ENCODE measurements at regions of chr6 and their contacts with region 1.

Region 1: DNA sequence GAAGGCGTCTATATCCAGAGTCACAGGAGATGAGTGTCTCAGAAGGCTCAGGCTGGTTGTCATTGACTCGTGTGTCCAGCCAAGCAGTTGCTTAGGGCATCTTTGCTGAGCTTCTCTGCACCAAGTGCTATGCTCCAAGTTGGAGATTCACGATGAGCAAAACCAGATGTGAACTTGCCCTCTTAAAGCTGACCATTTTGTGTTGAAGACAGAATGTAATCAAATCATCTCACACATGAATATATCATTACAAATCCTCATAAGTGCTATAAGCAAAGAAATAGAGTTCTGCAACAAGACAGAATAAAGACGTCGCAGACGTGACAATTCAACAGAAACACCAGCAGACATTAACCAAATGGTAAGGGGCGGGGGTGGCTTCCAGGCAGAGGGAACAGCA is 103.9 kb downstream of the ALDH8A1 start:
- DNase-seq: no peak
- H3K4me3 ChIP-seq: no peak overlapping the region
- CTCF ChIP-seq: no peak

Region 2: DNA sequence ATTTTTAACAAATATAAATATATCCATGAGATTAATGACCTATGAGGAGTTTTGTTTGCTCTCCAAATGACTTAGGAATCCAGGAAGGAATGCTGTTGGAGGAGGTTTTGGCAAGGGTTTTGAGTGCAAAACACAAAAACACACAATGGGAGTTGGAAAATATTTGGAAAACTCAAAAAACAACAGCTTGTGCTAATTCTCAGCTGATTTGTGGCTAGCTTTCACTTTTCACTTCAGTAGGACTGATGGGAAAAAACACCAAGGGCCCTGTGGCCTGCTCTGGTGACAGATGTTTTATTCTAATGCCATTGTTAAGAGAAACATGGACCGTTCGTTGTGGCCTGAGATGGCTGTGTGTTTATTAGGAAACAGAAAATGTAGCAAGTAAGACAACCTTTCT is 10.0 kb before region 1 on chr6:
- CTCF ChIA-PET with region 1: interaction called, 11 read pairs
- POLR2A ChIA-PET with region 1: no interaction called
- DNase-seq: no peak
- H3K4me3 ChIP-seq: no peak overlapping the region
- CTCF ChIP-seq: no peak

Measured in AG04449 (cell line).